ENCODE measurements at regions of chr2 and their contacts with region 1.

Region 1: GRCh38 chr2:238305092-238305862 is 15.0 kb upstream of the TRAF3IP1 start:
- DNase-seq: no peak
- ATAC-seq: no peak
- H3K4me3 ChIP-seq: no peak overlapping the region
- H3K4me3 Mint-ChIP-seq: no peak overlapping the region
- H3K27ac ChIP-seq: no peak overlapping the region
- H3K27ac Mint-ChIP-seq: no peak overlapping the region
- H3K4me1 ChIP-seq: no peaks in the 10 kb centered on the region
- H3K4me1 Mint-ChIP-seq: no peaks in the 10 kb centered on the region
- H3K27me3 ChIP-seq: peaks cover 0 to 30% of the 10 kb centered on the region in 2 experiments
- H3K27me3 Mint-ChIP-seq: peaks cover 3 to 4% of the 10 kb centered on the region in 2 donors

Region 2: DNA sequence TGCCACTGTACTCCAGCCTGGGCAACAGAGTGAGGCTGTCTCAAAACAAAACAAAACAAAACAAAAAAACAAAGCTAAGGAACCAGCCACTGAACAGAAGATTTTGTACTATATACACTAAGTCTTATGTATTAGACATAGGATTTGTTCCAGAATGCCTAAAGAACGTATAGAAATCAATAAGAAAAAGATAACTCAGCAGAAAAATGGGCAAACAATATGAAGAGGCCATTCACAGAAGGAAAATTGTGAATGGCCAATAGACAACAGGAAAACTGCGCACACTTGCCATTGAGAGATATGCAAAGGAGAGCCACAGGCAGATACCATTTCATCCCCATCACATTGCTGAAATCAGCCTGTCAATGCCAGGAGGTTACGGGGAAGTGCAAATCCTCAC is 353.4 kb before region 1 on chr2:
- CTCF ChIA-PET with region 1: interaction called in 1 of 2 experiments, 11 read pairs
- POLR2A ChIA-PET with region 1: no interaction called
- DNase-seq: no peak
- ATAC-seq: no peak
- H3K4me3 ChIP-seq: no peak overlapping the region
- H3K4me3 Mint-ChIP-seq: no peak overlapping the region
- H3K27ac ChIP-seq: no peak overlapping the region
- H3K27ac Mint-ChIP-seq: no peak overlapping the region
- H3K4me1 ChIP-seq: peaks cover 0 to 14% of the 10 kb centered on the region in 2 experiments
- H3K4me1 Mint-ChIP-seq: peaks cover 5 to 18% (median 7%) of the 10 kb centered on the region in 3 donors
- H3K27me3 ChIP-seq: peaks cover 0 to 20% of the 10 kb centered on the region in 2 experiments
- H3K27me3 Mint-ChIP-seq: peaks cover 0 to 10% of the 10 kb centered on the region in 2 donors

Measured in T-cell (primary cell).